ENCODE measurements at regions of chr9 and their contacts with region 1.

Region 1: DNA sequence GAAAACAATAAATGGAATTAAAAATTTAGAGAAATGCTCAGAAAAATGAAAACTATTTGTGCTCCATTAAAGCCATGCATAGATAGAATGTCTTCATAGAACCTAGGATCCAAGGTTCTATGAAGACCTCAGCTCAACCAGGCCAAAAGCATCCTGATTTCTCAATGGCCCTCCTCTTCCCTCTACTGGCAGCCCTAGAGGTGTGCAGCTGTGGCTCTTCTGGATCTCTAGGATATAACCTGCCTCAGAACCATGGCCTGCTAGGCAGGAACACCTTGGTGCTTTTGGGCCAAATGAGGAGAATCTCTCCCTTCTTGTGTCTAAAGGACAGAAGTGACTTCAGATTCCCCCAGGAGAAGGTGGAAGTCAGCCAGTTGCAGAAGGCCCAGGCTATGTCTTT is 15.1 kb downstream of the IFNA1 start:
- DNase-seq: peak; percentile 39 to 45 (median 44)
- H3K4me3 ChIP-seq: no peak overlapping the region
- H3K4me3 Mint-ChIP-seq: no peak overlapping the region
- H3K27ac ChIP-seq: no peak overlapping the region
- H3K27ac Mint-ChIP-seq: no peak overlapping the region
- H3K4me1 ChIP-seq: no peaks in the 10 kb centered on the region
- H3K4me1 Mint-ChIP-seq: no peaks in the 10 kb centered on the region
- H3K27me3 ChIP-seq: no peaks in the 10 kb centered on the region
- H3K27me3 Mint-ChIP-seq: peaks cover 10 to 16% of the 10 kb centered on the region in 2 donors

Region 2: DNA sequence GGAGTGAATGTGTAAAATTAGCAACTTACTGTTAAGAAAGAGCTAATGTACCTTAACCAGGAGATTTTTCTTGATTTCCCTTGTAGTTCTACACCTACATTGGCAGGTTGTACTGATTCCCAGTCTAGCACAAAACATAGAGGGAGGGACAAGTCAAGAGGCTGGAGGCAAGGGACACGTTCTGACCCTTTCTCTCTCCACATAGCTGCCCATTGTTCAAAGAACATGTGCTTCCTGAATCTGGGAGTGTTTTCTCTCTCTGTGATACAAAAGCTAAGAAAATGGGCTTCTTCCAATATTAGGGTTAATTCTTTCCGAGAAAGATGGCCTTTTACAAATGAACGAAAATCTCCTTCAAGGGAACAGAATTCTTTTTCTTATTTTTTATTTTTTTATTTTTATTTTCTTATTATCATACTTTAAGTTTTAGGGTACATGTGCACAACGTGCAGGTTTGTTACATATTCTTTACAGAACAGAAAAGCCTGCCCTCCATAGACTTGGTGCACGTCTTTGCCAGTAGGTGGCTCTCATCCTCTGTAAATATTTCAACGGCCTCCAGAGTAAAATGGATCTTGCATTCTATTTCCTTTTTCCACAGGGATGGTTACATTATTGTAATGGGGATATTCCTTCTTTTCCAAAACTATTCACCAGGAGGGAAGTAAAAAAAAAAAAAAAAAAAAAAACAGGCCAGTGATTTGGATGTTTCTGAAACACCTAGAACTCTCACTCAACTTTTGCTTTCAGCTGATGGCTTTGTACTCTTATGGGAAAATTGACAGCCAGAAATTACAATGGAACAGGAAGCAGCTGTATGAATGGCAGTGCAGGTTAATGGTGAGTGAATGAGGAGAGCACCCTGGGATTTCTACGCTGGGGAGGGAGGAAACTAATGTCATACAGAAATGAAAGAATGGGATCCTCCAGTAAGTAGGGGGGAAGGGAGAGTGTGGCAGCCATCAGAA is 137.1 kb before region 1 on chr9:
- CTCF ChIA-PET with region 1: interaction called, 5 read pairs
- POLR2A ChIA-PET with region 1: no interaction called
- intact Hi-C with region 1: loop called (anchors 1 kb)
- DNase-seq: peak; percentile 17 to 40 (median 33)
- H3K4me3 ChIP-seq: no peak overlapping the region
- H3K4me3 Mint-ChIP-seq: no peak overlapping the region
- H3K27ac ChIP-seq: no peak overlapping the region
- H3K27ac Mint-ChIP-seq: peak overlapping the region in 6 of 7 donors; percentile 17 to 87 (median 70)
- H3K4me1 ChIP-seq: no peaks in the 10 kb centered on the region
- H3K4me1 Mint-ChIP-seq: peaks cover 0 to 5% (median 3%) of the 10 kb centered on the region in 4 donors
- H3K27me3 ChIP-seq: no peaks in the 10 kb centered on the region
- H3K27me3 Mint-ChIP-seq: no peaks in the 10 kb centered on the region

Region 3: GRCh38 chr9:21434202-21435014 is 20.9 kb before region 1 on chr9:
- CTCF ChIA-PET with region 1: interaction called, 18 read pairs
- POLR2A ChIA-PET with region 1: no interaction called
- intact Hi-C with region 1: loop called (anchors 1 kb)
- DNase-seq: peak; percentile 31 to 55 (median 40)
- H3K4me3 ChIP-seq: no peak overlapping the region
- H3K4me3 Mint-ChIP-seq: no peak overlapping the region
- H3K27ac ChIP-seq: no peak overlapping the region
- H3K27ac Mint-ChIP-seq: no peak overlapping the region
- H3K4me1 ChIP-seq: no peaks in the 10 kb centered on the region
- H3K4me1 Mint-ChIP-seq: no peaks in the 10 kb centered on the region
- H3K27me3 ChIP-seq: no peaks in the 10 kb centered on the region
- H3K27me3 Mint-ChIP-seq: peaks cover 14 to 19% of the 10 kb centered on the region in 2 donors